ENCODE measurements at regions of chr12 and their contacts with region 1.

Region 1: GRCh38 chr12:77724367-77724957 is 106.2 kb upstream of the NAV3 start:
- ATAC-seq: peak in 3 of 8 experiments; percentile 71 to 80 (median 72)
- H3K4me3 ChIP-seq: no peak overlapping the region
- H3K27ac ChIP-seq: no peak overlapping the region
- H3K4me1 ChIP-seq: no peaks in the 10 kb centered on the region

Region 2: DNA sequence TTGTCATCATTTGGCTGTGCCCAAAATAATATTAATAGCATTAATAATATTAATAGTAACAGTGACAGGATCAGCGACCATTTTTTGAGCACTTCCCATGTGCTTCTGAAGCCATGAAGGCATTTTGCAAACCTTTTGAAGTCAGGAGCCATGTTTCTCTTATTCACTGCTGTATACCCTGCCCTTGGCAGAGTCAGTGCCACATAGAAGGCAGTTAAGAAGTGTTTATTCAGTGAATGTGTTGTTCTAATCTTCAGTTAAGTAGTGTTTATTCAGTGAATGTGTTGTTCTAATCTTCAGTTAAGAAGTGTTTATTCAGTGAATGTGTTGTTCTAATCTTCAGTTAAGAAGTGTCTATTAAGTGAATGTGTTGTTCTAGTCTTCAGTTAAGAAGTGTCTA is 213.5 kb before region 1 on chr12:
- in situ Hi-C with region 1: no loop called
- ATAC-seq: no peak
- H3K4me3 ChIP-seq: no peak overlapping the region
- H3K27ac ChIP-seq: no peak overlapping the region
- H3K4me1 ChIP-seq: peaks cover 0 to 3% of the 10 kb centered on the region in 2 donors

Region 3: DNA sequence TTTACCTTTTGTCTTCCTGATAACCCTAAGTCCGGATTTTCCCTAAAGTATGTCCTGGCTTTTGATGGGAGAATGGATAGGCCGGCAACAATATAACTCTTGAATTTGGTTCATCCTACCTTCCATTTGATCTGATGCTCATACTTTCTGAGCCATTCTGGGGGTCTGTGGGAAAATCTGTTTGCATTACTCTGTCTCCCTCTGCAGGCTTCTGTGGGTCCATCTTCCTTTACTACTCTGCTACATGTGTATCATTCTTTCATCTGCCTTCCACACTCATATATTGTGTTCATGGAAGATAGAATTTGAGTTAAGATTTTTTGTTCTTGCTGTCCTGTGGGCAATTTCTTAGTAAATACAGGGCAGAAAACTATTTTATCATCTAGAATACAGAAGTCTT is 207.8 kb after region 1 on chr12:
- in situ Hi-C with region 1: loop called in 1 of 9 experiments (anchors 10 kb)
- ATAC-seq: no peak
- H3K4me3 ChIP-seq: no peak overlapping the region
- H3K27ac ChIP-seq: no peak overlapping the region
- H3K4me1 ChIP-seq: no peaks in the 10 kb centered on the region

Measured in motor neuron (in vitro differentiated cells).